ENCODE measurements at regions of chr2 and their contacts with region 1.

Region 1: DNA sequence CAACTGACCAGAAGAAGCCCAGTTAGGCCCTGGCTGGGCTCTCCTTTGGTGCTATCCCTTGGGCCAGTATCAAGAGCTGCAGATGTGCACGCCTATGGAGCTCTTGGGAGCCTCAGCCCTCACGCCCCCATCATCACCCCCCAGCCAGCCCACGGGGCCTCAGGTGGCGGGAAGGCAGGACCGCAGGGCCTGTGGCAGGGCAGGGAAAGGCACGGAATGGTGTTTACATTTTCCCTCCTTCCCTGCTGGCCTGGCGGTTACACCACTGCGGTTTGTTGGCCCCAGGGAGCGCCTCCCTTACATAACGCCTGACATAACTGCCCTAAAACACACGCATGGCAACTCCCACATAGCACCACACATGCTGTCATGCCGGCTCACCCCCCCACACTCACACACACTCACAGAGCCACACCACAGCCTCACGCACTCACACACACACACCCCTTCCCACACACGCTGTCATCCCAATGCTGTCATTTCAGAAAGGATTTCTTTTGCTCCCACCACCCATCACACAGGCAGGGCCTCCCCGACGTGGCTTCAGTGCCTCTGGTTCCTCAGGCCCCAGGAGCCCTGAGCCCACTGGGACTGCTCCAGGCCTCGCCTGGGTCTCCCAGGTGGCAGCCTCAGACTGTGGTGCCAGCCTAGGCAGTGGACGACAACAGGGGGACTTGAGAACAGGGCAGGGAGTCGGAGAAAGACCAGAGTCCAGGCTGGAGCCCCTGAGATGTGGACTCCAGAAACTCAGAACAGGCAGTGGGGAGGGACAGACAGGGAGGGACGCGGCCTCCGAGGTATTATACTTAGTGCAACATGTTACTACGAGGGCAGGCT is 15.7 kb downstream of the ZFP36L2 start:
- DNase-seq: peak in 7 of 9 donors; percentile 34 to 67 (median 61)
- ATAC-seq: peak; percentile 81
- H3K4me3 ChIP-seq: no peak overlapping the region
- H3K4me3 Mint-ChIP-seq: peak overlapping the region in 9 of 10 donors; percentile 7 to 81 (median 56)
- H3K27ac ChIP-seq: no peak overlapping the region
- H3K27ac Mint-ChIP-seq: peak overlapping the region; percentile 2 to 94 (median 82)
- H3K4me1 ChIP-seq: peaks cover 0 to 27% of the 10 kb centered on the region in 2 donors
- H3K4me1 Mint-ChIP-seq: peaks cover 29 to 61% (median 44%) of the 10 kb centered on the region in 7 donors
- H3K27me3 ChIP-seq: no peaks in the 10 kb centered on the region
- H3K27me3 Mint-ChIP-seq: no peaks in the 10 kb centered on the region

Region 2: GRCh38 chr2:43199492-43200481 is 10.9 kb before region 1 on chr2:
- CTCF ChIA-PET with region 1: interaction called, 12 read pairs
- POLR2A ChIA-PET with region 1: interaction called, 543 read pairs
- intact Hi-C with region 1: loop called in 1 of 2 experiments (anchors 1 kb)
- DNase-seq: no peak
- ATAC-seq: no peak
- H3K4me3 ChIP-seq: no peak overlapping the region
- H3K4me3 Mint-ChIP-seq: no peak overlapping the region
- H3K27ac ChIP-seq: no peak overlapping the region
- H3K27ac Mint-ChIP-seq: peak overlapping the region in 4 of 9 donors; percentile 22 to 67 (median 53)
- H3K4me1 ChIP-seq: peaks cover 25 to 37% of the 10 kb centered on the region in 2 donors
- H3K4me1 Mint-ChIP-seq: peaks cover 27 to 71% (median 54%) of the 10 kb centered on the region in 7 donors
- H3K27me3 ChIP-seq: no peaks in the 10 kb centered on the region
- H3K27me3 Mint-ChIP-seq: no peaks in the 10 kb centered on the region